ENCODE measurements at regions of chr4 and their contacts with region 1.

Region 1: GRCh38 chr4:74189331-74190043 is 31.6 kb downstream of the MTHFD2L start:
- DNase-seq: peak; percentile 79
- ATAC-seq: peak; percentile 65
- H3K4me3 ChIP-seq: no peak overlapping the region
- H3K27ac ChIP-seq: peak overlapping the region; percentile 17
- H3K4me1 ChIP-seq: peaks cover 19% of the 10 kb centered on the region
- H3K27me3 ChIP-seq: no peaks in the 10 kb centered on the region
- CTCF ChIP-seq: peak; percentile 91

Region 2: DNA sequence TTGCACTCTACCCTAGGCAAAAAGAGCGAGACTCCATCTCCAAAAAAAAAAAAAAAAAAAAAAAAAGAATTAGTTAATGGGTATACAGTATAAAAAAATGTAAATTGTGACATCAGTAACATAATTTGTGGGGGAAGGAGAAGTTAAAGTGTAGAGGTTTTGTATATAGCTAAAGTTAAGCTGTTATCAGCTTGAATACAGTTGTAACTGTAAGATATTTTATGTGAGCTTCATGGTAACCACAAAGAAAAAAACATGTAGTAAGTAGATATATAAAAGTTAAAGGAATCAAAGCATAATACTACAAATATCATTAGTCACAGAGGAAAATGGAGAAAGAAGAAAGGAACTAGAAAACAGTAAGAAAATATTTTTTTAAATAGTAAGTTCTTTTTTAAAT is 65.6 kb after region 1 on chr4:
- CTCF ChIA-PET with region 1: no interaction called
- POLR2A ChIA-PET with region 1: interaction called, 36 read pairs
- intact Hi-C with region 1: no loop called
- DNase-seq: no peak
- ATAC-seq: no peak
- H3K4me3 ChIP-seq: no peak overlapping the region
- H3K27ac ChIP-seq: no peak overlapping the region
- H3K4me1 ChIP-seq: no peaks in the 10 kb centered on the region; the same call in 1 of the 2 replicates
- H3K27me3 ChIP-seq: no peaks in the 10 kb centered on the region
- CTCF ChIP-seq: no peak

Region 3: DNA sequence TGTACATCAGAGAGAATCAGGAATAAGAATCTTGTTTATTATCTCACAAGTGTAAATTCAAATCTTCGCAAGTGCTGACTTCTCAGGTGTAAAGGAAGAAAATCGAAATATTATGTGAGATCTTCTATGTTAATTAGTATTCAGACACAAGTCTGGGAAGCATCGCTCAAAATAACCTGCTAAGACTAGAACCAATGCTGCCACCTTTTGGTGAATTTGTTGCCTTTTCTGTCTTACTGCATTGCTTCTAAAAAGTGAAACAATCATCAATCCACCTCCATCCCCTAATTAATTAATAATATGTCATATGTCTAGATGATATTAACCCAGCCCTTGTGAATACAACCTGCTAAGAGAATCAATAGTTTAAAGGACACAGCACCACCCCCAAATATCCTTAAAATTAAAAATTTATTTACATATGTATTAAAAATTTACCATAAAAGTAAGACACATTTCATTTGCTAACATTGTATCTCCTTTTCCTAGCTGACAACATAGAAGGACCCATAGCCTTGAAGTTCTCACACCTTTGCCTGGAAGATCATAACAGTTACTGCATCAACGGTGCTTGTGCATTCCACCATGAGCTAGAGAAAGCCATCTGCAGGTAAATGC is 122.3 kb after region 1 on chr4:
- CTCF ChIA-PET with region 1: interaction called, 5 read pairs
- POLR2A ChIA-PET with region 1: no interaction called
- intact Hi-C with region 1: loop called (anchors 1 kb)
- DNase-seq: peak; percentile 91
- ATAC-seq: peak; percentile 57
- H3K4me3 ChIP-seq: peak overlapping the region; percentile 69
- H3K27ac ChIP-seq: no peak overlapping the region
- H3K4me1 ChIP-seq: peaks cover 34% of the 10 kb centered on the region
- H3K27me3 ChIP-seq: no peaks in the 10 kb centered on the region
- CTCF ChIP-seq: peak; percentile 93

Measured in PC-3 (cell line).